ENCODE measurements at regions of chr7 and their contacts with region 1.

Region 1: GRCh38 chr7:117873310-117874190 is at the start of gene CTTNBP2:
- DNase-seq: peak; percentile 43 to 60
- H3K4me3 ChIP-seq: peak within 1 kb of the TSS; percentile 62
- H3K4me3 Mint-ChIP-seq: peak within 1 kb of the TSS; percentile 91
- H3K27ac Mint-ChIP-seq: peak within 1 kb of the TSS; percentile 51
- H3K4me1 ChIP-seq: 0 out of 2 replicates have a peak, but pooled peaks cover 7% of the 10 kb centered on the region
- H3K4me1 Mint-ChIP-seq: peaks cover 13% of the 10 kb centered on the region
- H3K27me3 ChIP-seq: no peaks in the 10 kb centered on the region
- H3K27me3 Mint-ChIP-seq: peaks cover 23% of the 10 kb centered on the region
- CTCF ChIP-seq: no peak
- total RNA-seq, gene CTTNBP2: 3.2 and 3.3 TPM in 2 replicates

Region 2: GRCh38 chr7:117623606-117624005 is 249.9 kb before region 1 on chr7:
- CTCF ChIA-PET with region 1: no interaction called
- POLR2A ChIA-PET with region 1: no interaction called
- intact Hi-C with region 1: no loop called
- DNase-seq: no peak
- H3K4me3 ChIP-seq: no peak overlapping the region
- H3K4me3 Mint-ChIP-seq: no peak overlapping the region
- H3K27ac Mint-ChIP-seq: no peak overlapping the region
- H3K4me1 ChIP-seq: peaks cover 13% of the 10 kb centered on the region
- H3K4me1 Mint-ChIP-seq: peaks cover 25% of the 10 kb centered on the region
- H3K27me3 ChIP-seq: no peaks in the 10 kb centered on the region
- H3K27me3 Mint-ChIP-seq: no peaks in the 10 kb centered on the region
- CTCF ChIP-seq: no peak

Region 3: GRCh38 chr7:117791877-117792780 is 81.4 kb before region 1 on chr7:
- CTCF ChIA-PET with region 1: no interaction called
- POLR2A ChIA-PET with region 1: no interaction called
- intact Hi-C with region 1: no loop called
- DNase-seq: no peak
- H3K4me3 ChIP-seq: no peak overlapping the region
- H3K4me3 Mint-ChIP-seq: no peak overlapping the region
- H3K27ac Mint-ChIP-seq: no peak overlapping the region
- H3K4me1 ChIP-seq: no peaks in the 10 kb centered on the region
- H3K4me1 Mint-ChIP-seq: no peaks in the 10 kb centered on the region
- H3K27me3 ChIP-seq: no peaks in the 10 kb centered on the region; the same call in 1 of the 2 replicates
- H3K27me3 Mint-ChIP-seq: peaks cover under 1% of the 10 kb centered on the region
- CTCF ChIP-seq: no peak

Region 4: DNA sequence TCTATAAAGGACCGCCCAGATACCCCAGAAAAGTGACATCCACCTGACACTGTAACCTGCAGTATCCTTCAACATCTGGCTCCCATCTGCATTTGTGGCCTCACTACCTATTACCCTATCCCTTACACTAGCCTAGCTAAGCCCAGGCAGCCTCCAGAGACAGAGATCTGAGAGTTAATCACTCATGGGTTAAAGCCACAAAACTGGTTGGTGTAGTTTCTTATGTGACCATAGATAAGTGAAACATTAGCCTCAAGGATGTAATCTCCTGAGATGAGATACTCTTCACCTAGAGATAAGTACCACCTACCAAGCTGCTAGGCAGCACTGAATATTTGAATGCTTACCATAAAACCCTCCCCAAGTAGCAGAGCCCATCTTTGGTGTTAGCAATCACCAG is 35.7 kb before region 1 on chr7:
- CTCF ChIA-PET with region 1: no interaction called
- POLR2A ChIA-PET with region 1: no interaction called
- intact Hi-C with region 1: loop called (anchors 5 kb)
- DNase-seq: peak; percentile 44 to 59
- H3K4me3 ChIP-seq: no peak overlapping the region
- H3K4me3 Mint-ChIP-seq: no peak overlapping the region
- H3K27ac Mint-ChIP-seq: no peak overlapping the region
- H3K4me1 ChIP-seq: peaks cover 16% of the 10 kb centered on the region
- H3K4me1 Mint-ChIP-seq: peaks cover 16% of the 10 kb centered on the region
- H3K27me3 ChIP-seq: no peaks in the 10 kb centered on the region
- H3K27me3 Mint-ChIP-seq: peaks cover 4% of the 10 kb centered on the region
- CTCF ChIP-seq: no peak

Region 5: GRCh38 chr7:117901089-117901797 is 27.7 kb after region 1 on chr7:
- CTCF ChIA-PET with region 1: no interaction called
- POLR2A ChIA-PET with region 1: no interaction called
- intact Hi-C with region 1: no loop called
- DNase-seq: peak in 1 of 2 experiments; percentile 9
- H3K4me3 ChIP-seq: no peak overlapping the region
- H3K4me3 Mint-ChIP-seq: no peak overlapping the region
- H3K27ac Mint-ChIP-seq: no peak overlapping the region
- H3K4me1 ChIP-seq: no peaks in the 10 kb centered on the region
- H3K4me1 Mint-ChIP-seq: peaks cover 8% of the 10 kb centered on the region
- H3K27me3 ChIP-seq: no peaks in the 10 kb centered on the region
- H3K27me3 Mint-ChIP-seq: no peaks in the 10 kb centered on the region
- CTCF ChIP-seq: peak in 1 of 2 experiments; percentile 7

Region 6: DNA sequence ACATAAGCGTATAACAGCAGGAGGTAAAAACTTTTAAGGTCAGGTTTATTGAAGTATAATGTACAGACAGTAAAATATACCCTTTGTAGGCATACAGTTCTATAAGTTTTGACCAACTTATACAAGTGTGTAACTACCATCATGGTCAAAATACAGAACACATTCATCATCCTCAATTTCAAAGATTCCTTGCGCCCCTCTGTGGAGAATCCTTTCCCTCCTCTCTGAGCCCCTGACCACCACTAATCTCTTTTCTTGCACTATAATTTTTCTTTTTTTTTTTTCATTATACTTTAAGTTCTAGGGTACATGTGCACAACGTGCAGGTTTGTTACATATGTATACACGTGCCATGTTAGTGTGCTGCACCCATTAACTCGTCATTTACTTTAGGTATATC is 57.8 kb after region 1 on chr7:
- CTCF ChIA-PET with region 1: no interaction called
- POLR2A ChIA-PET with region 1: no interaction called
- intact Hi-C with region 1: loop called (anchors 5 kb)
- DNase-seq: no peak
- H3K4me3 ChIP-seq: no peak overlapping the region
- H3K4me3 Mint-ChIP-seq: no peak overlapping the region
- H3K27ac Mint-ChIP-seq: no peak overlapping the region
- H3K4me1 ChIP-seq: no peaks in the 10 kb centered on the region
- H3K4me1 Mint-ChIP-seq: no peaks in the 10 kb centered on the region
- H3K27me3 ChIP-seq: no peaks in the 10 kb centered on the region
- H3K27me3 Mint-ChIP-seq: no peaks in the 10 kb centered on the region
- CTCF ChIP-seq: no peak

Region 7: DNA sequence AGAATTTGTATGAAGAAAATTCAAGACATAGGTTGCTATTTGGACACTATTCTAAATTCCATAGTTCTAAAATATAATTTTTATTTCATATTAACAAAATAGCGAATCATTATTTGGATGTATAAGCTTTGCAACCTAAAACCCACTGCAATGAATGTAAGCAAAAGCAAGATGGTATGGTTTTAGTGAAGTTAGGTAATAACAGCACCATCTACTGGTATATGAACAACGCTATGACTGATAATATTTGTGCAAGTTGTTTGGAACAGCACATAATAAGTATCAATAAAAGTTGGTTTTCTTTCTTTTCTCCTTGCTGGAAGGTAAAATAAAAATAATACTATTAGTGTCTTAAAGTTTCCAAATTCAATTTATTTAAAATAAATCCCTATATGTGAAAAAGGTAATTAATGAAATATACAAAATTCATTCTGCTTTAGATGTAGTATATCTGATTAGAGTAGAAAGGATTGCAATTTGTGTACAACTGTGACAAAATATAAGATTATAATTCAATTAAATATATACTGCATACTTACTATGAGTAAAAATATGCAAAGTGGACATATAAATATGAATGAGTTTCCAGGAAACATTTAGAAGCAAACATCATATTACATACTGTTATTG is 231.4 kb after region 1 on chr7:
- CTCF ChIA-PET with region 1: no interaction called
- POLR2A ChIA-PET with region 1: no interaction called
- intact Hi-C with region 1: loop called (anchors 2 kb)
- DNase-seq: peak in 1 of 2 experiments; percentile 7
- H3K4me3 ChIP-seq: no peak overlapping the region
- H3K4me3 Mint-ChIP-seq: no peak overlapping the region
- H3K27ac Mint-ChIP-seq: no peak overlapping the region
- H3K4me1 ChIP-seq: no peaks in the 10 kb centered on the region
- H3K4me1 Mint-ChIP-seq: no peaks in the 10 kb centered on the region
- H3K27me3 ChIP-seq: no peaks in the 10 kb centered on the region
- H3K27me3 Mint-ChIP-seq: peaks cover 2% of the 10 kb centered on the region
- CTCF ChIP-seq: peak in 1 of 2 experiments; percentile 43